ENCODE measurements at regions of chr1 and their contacts with region 1.

Region 1: DNA sequence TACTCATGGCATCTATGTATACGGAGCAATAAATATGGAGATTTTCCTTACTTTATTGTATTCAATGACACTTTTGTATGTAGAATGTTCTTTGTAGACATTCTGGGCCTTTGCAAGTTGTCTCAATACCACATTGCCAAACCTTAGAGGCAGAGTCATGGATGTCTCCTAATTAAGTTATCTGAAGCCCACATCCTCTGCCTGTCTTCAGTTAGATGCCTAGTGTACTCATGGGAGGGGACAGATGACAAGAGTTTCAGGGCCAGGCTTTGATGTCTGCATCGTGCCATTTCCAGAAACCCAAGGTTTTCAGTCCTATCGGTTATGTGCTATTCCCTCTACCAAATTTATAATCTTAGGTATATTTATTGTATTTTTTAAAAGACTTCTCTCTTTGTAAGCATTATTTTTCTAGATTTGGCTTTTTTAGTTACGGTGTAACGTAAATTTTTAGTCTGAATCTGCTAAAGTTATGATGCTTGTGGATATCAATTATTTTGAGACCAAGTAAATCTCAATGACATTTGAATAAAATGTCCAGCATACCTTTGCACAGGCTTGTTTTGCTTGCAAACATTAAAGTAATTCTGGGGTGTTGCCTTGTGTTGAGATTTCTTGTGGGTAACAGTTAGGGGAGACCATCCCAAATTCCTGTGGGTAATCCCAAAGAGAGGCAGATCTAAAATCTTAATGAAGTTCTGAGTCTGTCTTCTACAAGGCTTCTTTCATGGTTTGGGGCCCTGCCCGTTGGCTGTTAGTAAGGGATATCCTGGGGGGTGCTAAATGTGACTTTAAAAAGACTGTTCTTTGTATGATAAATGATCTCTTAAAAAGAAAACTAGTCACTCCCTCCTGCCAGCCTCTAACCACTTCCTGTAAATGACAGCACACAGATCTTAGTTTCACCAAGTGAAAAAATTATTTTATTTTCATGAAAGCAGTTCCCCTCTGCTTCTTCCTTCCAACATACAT is 8.0 kb upstream of the MACF1 start:
- DNase-seq: no peak
- ATAC-seq: peak; percentile 15

Region 2: DNA sequence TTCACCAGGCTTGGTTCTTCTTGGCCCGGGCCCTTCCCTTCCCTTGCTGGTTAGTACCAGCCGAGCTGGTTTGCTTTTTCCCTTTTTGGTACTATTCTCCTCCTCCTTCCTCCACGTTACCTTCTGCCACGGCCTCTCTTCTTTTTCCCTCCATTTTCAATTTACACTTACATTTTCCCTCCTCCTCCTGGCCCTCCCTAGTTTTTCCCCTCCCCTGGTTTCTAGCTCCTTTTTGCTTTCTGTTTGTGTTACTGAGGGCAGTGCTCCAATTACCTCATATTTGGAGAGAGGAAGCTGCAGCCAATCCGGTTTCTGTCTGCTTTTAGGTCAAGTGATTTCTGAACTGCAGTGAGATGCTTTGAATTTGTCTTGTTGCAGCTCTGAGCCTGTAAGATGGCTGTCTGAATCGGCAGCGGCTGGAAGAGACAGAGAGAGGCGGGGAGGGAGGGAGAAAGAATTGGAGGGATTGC is 71.6 kb after region 1 on chr1:
- intact Hi-C with region 1: loop called in 1 of 2 experiments (anchors 10 kb)
- DNase-seq: peak in 1 of 2 donors; percentile 32
- ATAC-seq: peak; percentile 16